A549 (cell line): ENCODE measurements at regions of chr6 and their contacts with region 1.

Region 1: GRCh38 chr6:113994918-113995342 is 24.0 kb upstream of the HDAC2 start:
- DNase-seq: peak; percentile 62 to 80
- ATAC-seq: peak; percentile 97
- H3K4me3 ChIP-seq: no peak overlapping the region
- H3K27ac ChIP-seq: no peak overlapping the region
- H3K4me1 ChIP-seq: peaks cover 14% of the 10 kb centered on the region; the same call in 1 of the 3 replicates
- CTCF ChIP-seq: peak; percentile 79
- EP300 ChIP-seq: no peak
- POLR2A ChIP-seq: no peak
- RAD21 ChIP-seq: peak; percentile 79 to 84

Region 2: DNA sequence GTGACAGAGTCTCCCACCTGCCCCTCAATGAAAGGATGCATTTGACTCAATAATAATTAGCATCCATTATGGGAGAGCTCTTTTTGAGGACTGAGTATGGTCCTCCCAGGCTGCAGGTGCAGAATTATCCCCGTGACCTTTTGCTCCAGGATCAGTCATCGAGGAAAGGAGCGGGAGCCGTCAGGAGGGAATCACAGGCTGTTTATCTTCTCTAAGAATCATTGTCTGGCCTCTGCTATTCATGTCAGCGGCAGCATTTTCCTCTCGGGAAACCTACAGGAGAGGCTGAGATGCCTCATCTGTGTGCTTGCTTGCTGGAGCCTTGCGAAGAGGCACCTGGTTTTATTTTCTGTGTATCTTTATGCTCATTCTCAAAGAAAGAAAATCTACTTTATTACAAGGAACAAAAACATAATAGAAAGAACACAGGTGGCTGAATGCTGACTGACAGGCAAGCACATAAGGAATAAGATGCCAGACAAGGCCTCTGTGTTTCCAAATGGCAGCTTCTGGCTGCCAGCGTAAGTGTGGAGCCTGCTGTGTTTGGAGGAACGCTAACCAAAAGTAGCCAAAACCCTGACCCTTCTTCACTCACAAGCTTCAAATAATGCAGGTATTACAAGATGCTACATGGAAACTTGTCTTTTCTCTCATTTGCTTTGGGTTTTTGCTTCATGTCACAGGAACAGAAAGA is 676.9 kb before region 1 on chr6:
- CTCF ChIA-PET with region 1: no interaction called
- POLR2A ChIA-PET with region 1: no interaction called
- DNase-seq: no peak
- ATAC-seq: no peak
- H3K4me3 ChIP-seq: no peak overlapping the region
- H3K27ac ChIP-seq: no peak overlapping the region
- H3K4me1 ChIP-seq: no peaks in the 10 kb centered on the region
- CTCF ChIP-seq: no peak
- EP300 ChIP-seq: no peak
- POLR2A ChIP-seq: no peak
- RAD21 ChIP-seq: no peak

Region 3: GRCh38 chr6:114100215-114100994 is 105.5 kb after region 1 on chr6:
- CTCF ChIA-PET with region 1: interaction called, 26 read pairs
- POLR2A ChIA-PET with region 1: no interaction called
- DNase-seq: no peak
- ATAC-seq: no peak
- H3K4me3 ChIP-seq: no peak overlapping the region
- H3K27ac ChIP-seq: no peak overlapping the region
- H3K4me1 ChIP-seq: no peaks in the 10 kb centered on the region
- CTCF ChIP-seq: no peak
- EP300 ChIP-seq: no peak
- POLR2A ChIP-seq: no peak
- RAD21 ChIP-seq: no peak

Region 4: DNA sequence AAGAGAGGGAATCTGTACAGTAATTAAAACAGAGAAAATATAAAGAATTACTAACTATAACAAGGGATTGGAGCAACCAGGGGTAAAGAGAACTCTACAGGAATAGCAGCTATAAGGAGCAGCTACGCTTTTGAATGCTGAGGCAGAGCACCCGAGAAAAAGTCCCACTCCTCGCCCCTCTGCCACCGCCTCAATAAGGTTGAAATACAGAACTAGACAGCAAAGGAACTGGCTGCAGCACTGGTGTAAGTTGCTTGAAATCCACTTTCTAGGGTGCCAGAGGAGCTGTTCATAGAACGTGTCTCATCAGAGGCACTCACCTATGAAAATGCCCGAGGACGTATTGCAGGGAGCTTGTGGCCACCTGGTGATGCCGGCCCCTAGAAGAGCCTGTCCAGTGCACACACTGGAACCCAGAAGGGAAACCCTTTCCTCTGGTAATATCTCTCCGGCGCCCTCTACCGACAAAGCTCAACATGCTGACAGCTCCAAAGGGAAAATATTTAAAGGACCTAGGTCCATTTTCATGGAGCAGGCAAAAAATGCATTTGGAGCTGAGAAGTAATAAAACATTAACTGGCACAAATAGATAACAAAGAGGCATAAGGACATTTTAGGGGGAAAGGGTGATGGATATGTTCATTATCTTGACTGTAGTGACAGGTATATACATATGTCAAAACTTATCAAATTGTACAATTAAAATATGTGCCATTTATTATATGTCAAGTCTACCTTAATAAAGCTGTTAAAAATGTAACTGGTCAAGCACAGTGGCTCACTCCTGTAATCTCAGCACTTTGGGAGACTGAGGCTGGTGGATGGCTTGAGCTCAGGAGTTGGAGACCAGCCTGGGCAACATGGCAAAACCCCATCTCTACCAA is 113.4 kb after region 1 on chr6:
- CTCF ChIA-PET with region 1: interaction called, 34 read pairs
- POLR2A ChIA-PET with region 1: interaction called, 5 read pairs
- DNase-seq: peak; percentile 25 to 38
- ATAC-seq: peak; percentile 74 to 86
- H3K4me3 ChIP-seq: no peak overlapping the region
- H3K27ac ChIP-seq: no peak overlapping the region
- H3K4me1 ChIP-seq: no peaks in the 10 kb centered on the region
- CTCF ChIP-seq: peak; percentile 47
- EP300 ChIP-seq: no peak
- POLR2A ChIP-seq: no peak
- RAD21 ChIP-seq: peak; percentile 49 to 55; a peak in 4 of 5 replicates

Region 5: DNA sequence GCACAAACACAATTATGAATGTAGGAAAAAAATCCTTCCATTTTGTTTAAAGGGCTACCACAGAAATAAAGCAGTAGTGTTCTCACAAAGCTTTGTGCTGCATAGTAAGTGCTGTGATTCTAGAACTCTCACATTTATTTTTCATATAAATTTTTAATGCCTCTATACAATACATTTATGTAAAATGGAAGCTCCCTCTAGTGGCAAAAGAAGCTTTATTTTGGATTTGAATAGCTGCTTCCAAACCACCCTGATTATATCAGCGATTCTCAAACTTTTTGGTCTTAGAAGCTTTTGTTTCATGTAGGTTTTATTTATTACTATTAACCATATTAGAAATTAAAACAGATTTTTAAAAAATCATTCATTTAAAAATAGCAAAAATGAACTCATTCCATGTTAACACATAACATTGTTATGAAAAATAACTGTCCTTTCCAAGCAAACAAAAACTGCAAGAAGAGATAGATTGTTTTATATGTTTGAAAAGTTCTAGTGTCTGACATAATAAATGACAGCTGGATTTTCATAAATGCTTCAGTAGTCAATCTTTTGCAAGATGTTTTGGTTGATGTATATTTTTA is 309.5 kb after region 1 on chr6:
- CTCF ChIA-PET with region 1: interaction called, 19 read pairs
- POLR2A ChIA-PET with region 1: no interaction called
- DNase-seq: peak in 1 of 2 experiments; percentile 9
- ATAC-seq: no peak
- H3K4me3 ChIP-seq: no peak overlapping the region
- H3K27ac ChIP-seq: no peak overlapping the region
- H3K4me1 ChIP-seq: no peaks in the 10 kb centered on the region
- CTCF ChIP-seq: peak; percentile 49
- EP300 ChIP-seq: no peak
- POLR2A ChIP-seq: no peak
- RAD21 ChIP-seq: peak; percentile 10 to 34; a peak in 2 of 5 replicates